SK-N-SH (cell line): ENCODE measurements at regions of chr3 and their contacts with region 1.

Region 1: DNA sequence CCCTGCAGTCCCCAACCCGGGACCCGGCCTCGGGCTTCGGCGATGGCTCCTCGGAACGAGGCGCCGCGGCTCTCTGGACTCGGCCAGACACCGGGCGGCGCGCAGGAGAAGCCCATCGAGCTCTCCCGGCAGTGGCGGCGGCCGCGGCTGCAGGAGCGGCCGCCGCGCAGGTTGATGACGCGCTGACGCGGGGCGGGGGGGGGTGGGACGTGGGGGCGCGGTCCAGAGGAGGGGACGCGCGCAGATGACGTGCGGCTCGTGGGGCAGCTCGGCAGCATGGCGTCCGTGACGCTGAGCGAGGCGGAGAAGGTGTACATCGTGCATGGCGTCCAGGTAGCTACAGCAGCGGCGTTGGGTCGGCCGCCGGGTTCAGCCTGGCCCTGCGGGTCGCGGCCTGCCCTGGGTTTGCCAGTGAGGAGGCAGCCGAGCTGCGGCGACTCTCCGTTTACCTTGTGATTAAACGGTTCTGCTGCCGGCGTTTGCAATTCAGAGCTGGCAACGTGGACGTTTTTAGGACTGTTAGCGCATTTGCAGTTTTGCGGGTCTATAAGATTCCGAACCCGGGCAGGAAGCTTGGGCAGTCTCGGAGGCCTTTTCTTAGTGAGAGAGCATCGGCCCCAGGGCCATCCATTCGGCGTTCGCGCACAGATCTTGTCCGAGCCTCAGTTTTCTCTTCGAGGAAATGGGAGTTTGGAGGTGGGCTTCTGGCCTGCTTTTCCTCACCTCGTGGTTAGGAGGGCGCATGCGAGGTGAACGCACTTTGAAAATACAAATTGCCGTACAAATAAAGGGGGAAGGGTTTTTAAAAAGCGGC is at the starts of genes EXOSC7 and ZDHHC3:
- DNase-seq: peak; percentile 98
- H3K4me3 ChIP-seq: peak within 1 kb of the TSS; percentile 95 to 97
- H3K27ac ChIP-seq: peak within 1 kb of the TSS; percentile 75 to 80
- H3K4me1 ChIP-seq: peaks cover 7 to 19% of the 10 kb centered on the region in 2 experiments; a peak in 3 of 4 replicates
- H3K27me3 ChIP-seq: no peaks in the 10 kb centered on the region
- CTCF ChIP-seq: no peak
- EP300 ChIP-seq: no peak
- RAD21 ChIP-seq: no peak
- polyA plus RNA-seq, gene EXOSC7: 83.5 and 96.4 TPM in 2 replicates
- polyA plus RNA-seq, gene ZDHHC3: 60.7 and 72.3 TPM in 2 replicates

Region 2: GRCh38 chr3:44913868-44914468 is 62.2 kb before region 1 on chr3:
- CTCF ChIA-PET with region 1: interaction called, 19 read pairs
- POLR2A ChIA-PET with region 1: no interaction called
- DNase-seq: peak; percentile 74
- H3K4me3 ChIP-seq: no peak overlapping the region
- H3K27ac ChIP-seq: no peak overlapping the region
- H3K4me1 ChIP-seq: peaks cover 0 to 7% of the 10 kb centered on the region in 2 experiments; a peak in 1 of 4 replicates
- H3K27me3 ChIP-seq: no peaks in the 10 kb centered on the region
- CTCF ChIP-seq: peak; percentile 80
- EP300 ChIP-seq: no peak
- RAD21 ChIP-seq: peak; percentile 80

Region 3: GRCh38 chr3:44963571-44964325 is 12.5 kb before region 1 on chr3:
- CTCF ChIA-PET with region 1: no interaction called
- POLR2A ChIA-PET with region 1: no interaction called
- DNase-seq: no peak
- H3K4me3 ChIP-seq: no peak overlapping the region
- H3K27ac ChIP-seq: peak overlapping the region in 1 of 2 experiments; percentile 22; a peak in 1 of 4 replicates
- H3K4me1 ChIP-seq: peaks cover 0 to 39% of the 10 kb centered on the region in 2 experiments; a peak in 3 of 4 replicates
- H3K27me3 ChIP-seq: no peaks in the 10 kb centered on the region
- CTCF ChIP-seq: no peak
- EP300 ChIP-seq: no peak
- RAD21 ChIP-seq: no peak

Region 4: GRCh38 chr3:44992555-44993470 is 16.6 kb after region 1 on chr3:
- CTCF ChIA-PET with region 1: interaction called, 10 read pairs
- POLR2A ChIA-PET with region 1: interaction called, 7 read pairs
- DNase-seq: peak; percentile 36
- H3K4me3 ChIP-seq: peak overlapping the region in 1 of 2 experiments; percentile 35; a peak in 1 of 4 replicates
- H3K27ac ChIP-seq: 0 out of 4 replicates have a peak overlapping the region, but pooled peaks of 1 of the 2 experiments have one; percentile 30
- H3K4me1 ChIP-seq: peaks cover 31 to 34% of the 10 kb centered on the region in 2 experiments; a peak in 3 of 4 replicates
- H3K27me3 ChIP-seq: no peaks in the 10 kb centered on the region
- CTCF ChIP-seq: peak; percentile 68
- EP300 ChIP-seq: no peak
- RAD21 ChIP-seq: peak; percentile 37; the same call in 1 of the 2 replicates

Region 5: DNA sequence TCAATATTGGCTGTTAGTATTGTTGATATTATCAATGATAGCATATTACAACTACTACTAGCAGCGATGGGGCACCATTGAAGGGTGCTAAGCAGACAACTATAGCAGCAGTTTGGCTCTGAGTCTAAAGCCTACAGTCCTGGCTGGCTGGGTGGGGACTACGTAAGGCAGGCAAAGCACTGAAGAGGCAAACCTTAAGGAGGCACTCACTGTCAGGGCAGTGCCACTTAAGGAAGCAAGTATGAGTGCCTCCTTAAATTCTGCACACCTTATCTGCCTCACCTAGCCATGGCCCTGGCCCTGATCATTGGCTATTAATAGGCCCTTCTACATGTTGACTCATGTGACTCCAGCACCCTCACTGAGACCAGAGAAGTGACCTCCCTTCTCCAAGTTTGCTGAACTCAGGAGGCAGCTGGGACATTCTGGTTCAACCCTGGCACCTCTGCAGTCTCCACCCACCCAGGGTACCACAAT is 149.4 kb after region 1 on chr3:
- CTCF ChIA-PET with region 1: no interaction called
- POLR2A ChIA-PET with region 1: no interaction called
- DNase-seq: no peak
- H3K4me3 ChIP-seq: no peak overlapping the region
- H3K27ac ChIP-seq: peak overlapping the region in 1 of 2 experiments; percentile 86; a peak in 2 of 4 replicates
- H3K4me1 ChIP-seq: peaks cover 6 to 36% of the 10 kb centered on the region in 2 experiments
- H3K27me3 ChIP-seq: no peaks in the 10 kb centered on the region
- CTCF ChIP-seq: no peak
- EP300 ChIP-seq: no peak
- RAD21 ChIP-seq: no peak